ENCODE measurements at regions of chr10 and their contacts with region 1.

Region 1: GRCh38 chr10:119750391-119751230 is 24.8 kb downstream of the INPP5F start:
- DNase-seq: peak in 1 of 2 experiments; percentile 69
- H3K4me3 ChIP-seq: no peak overlapping the region
- H3K27ac ChIP-seq: no peak overlapping the region
- H3K4me1 ChIP-seq: peaks cover 0 to 4% (median 2%) of the 10 kb centered on the region in 4 experiments; a peak in 2 of 7 replicates
- H3K27me3 ChIP-seq: no peaks in the 10 kb centered on the region
- CTCF ChIP-seq: peak; percentile 74 to 99 (median 83)
- EP300 ChIP-seq: no peak
- POLR2A ChIP-seq: no peak
- RAD21 ChIP-seq: peak; percentile 98 to 99

Region 2: DNA sequence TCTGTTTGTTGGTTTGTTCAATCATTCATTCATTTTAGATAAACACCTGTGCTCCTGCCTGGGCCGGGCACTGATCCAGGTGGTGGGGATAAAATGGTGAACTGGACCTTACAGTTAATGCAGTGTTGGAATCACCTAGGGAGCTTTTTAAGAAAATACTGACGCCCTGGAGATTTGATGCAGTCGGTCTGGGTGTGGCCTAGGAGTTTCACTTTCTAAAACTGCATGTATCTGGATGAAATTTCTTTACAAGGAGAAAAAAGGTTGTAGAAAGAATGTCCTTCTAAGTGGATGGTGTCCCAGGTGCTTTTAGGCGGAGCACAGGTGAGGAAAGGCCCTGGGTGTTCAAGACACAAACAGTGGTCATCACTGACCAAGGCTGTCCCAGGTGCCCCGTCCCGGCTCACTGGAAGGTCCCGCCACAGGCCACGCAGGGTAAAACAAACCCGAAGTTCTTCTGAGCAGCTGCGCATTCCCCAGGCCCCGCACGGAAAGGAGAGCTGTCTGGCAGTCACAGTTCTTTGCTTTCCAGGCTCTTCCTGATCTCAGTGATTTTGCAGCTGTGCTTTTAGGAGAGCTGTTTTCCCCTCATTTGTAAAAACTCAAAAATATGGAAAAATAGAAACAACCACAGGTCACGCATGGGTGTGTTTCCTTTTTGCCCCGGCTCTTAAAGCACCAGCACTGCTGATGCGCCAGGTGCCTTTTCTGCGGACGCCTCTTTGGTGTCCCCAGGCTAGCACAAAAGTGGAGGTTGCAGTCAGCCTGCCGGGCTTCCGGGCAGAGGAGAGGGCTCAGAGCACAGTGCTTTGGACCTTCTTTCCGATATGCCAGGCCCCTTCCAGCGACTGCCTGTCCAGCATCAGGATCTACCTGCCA is 381.4 kb before region 1 on chr10:
- CTCF ChIA-PET with region 1: no interaction called
- POLR2A ChIA-PET with region 1: no interaction called
- DNase-seq: no peak
- H3K4me3 ChIP-seq: no peak overlapping the region
- H3K27ac ChIP-seq: no peak overlapping the region
- H3K4me1 ChIP-seq: no peaks in the 10 kb centered on the region
- H3K27me3 ChIP-seq: no peaks in the 10 kb centered on the region
- CTCF ChIP-seq: no peak
- EP300 ChIP-seq: no peak
- POLR2A ChIP-seq: no peak
- RAD21 ChIP-seq: no peak

Region 3: DNA sequence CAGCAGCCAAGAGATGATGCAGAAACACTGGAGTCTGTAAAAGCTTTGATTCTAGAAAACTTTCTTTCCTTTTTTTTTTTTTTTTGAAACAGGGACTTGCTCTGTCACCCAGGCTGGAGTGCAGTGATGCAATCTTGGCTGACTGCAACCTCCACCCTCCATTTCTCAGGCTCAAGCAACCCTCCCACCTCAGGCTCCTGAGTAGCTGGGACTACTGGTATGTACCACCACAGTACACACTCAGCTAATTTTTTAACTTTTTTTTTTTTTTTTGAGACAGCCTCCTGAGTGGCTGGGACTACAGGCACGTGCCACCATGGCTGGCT is 116.4 kb before region 1 on chr10:
- CTCF ChIA-PET with region 1: no interaction called
- POLR2A ChIA-PET with region 1: no interaction called
- DNase-seq: no peak
- H3K4me3 ChIP-seq: no peak overlapping the region
- H3K27ac ChIP-seq: no peak overlapping the region
- H3K4me1 ChIP-seq: no peaks in the 10 kb centered on the region
- H3K27me3 ChIP-seq: no peaks in the 10 kb centered on the region
- CTCF ChIP-seq: no peak
- EP300 ChIP-seq: no peak
- POLR2A ChIP-seq: no peak
- RAD21 ChIP-seq: no peak

Region 4: GRCh38 chr10:119737827-119738226 is 12.8 kb before region 1 on chr10:
- CTCF ChIA-PET with region 1: interaction called, 32 read pairs
- POLR2A ChIA-PET with region 1: interaction called, 5 read pairs
- DNase-seq: no peak
- H3K4me3 ChIP-seq: no peak overlapping the region
- H3K27ac ChIP-seq: no peak overlapping the region
- H3K4me1 ChIP-seq: peaks cover 0 to 15% (median 6%) of the 10 kb centered on the region in 4 experiments; a peak in 3 of 7 replicates
- H3K27me3 ChIP-seq: no peaks in the 10 kb centered on the region
- CTCF ChIP-seq: no peak
- EP300 ChIP-seq: no peak
- POLR2A ChIP-seq: no peak
- RAD21 ChIP-seq: no peak

Region 5: GRCh38 chr10:119769886-119770285 is 19.3 kb after region 1 on chr10:
- CTCF ChIA-PET with region 1: interaction called, 23 read pairs
- POLR2A ChIA-PET with region 1: no interaction called
- DNase-seq: no peak
- H3K4me3 ChIP-seq: no peak overlapping the region
- H3K27ac ChIP-seq: no peak overlapping the region
- H3K4me1 ChIP-seq: peaks cover 0 to 2% (median 0%) of the 10 kb centered on the region in 4 experiments; a peak in 2 of 7 replicates
- H3K27me3 ChIP-seq: no peaks in the 10 kb centered on the region
- CTCF ChIP-seq: no peak
- EP300 ChIP-seq: no peak
- POLR2A ChIP-seq: no peak
- RAD21 ChIP-seq: no peak

Region 6: DNA sequence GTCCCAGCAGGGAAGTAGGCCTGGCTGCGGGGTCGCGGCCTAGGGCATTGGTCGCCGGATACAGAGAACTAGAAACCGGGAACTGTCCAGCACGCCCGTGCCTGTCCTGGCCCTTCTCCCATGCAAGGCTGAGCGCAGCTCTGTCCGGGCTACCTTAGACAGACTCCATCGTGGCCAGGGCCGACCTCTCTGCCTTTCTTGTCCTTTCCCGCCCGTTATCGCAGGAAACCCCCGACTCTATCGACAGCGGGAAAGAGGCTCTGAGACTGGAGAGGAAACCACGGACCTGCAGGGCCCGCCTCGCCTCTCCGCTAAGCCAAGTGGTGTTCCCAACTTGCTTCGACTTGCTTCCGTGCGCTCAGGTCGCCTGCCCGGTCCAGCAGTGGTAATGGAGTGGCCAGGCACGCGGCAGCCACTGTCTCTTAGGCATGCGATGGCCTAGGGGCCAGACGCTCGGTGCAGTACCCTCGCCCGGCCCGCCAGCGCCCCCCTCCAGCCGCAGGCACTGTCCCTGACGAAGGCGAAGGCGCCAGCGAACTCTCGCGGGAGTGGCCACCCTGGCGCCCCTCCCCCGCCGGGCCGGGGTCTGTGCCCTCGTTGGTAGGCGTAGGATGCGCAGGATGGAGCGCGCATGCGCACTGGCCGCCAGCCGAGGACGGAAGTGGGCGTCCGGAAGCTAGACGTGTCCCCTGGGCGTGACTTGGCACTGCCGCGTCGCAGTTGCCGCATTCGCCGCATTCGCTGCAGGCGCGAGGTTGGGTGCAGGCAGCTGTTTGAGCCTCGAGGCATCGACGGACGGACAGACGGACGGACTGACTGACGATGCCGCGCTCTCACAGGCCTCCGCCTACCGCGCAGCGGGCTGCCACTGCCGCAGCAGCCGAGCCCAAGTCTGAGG is 67.6 kb after region 1 on chr10:
- CTCF ChIA-PET with region 1: interaction called, 61 read pairs
- POLR2A ChIA-PET with region 1: interaction called, 40 read pairs
- DNase-seq: peak; percentile 95 to 96
- H3K4me3 ChIP-seq: peak overlapping the region; percentile 54 to 90 (median 74)
- H3K27ac ChIP-seq: peak overlapping the region; percentile 90
- H3K4me1 ChIP-seq: peaks cover 0 to 11% (median 4%) of the 10 kb centered on the region in 4 experiments; a peak in 5 of 7 replicates
- H3K27me3 ChIP-seq: no peaks in the 10 kb centered on the region
- CTCF ChIP-seq: peak; percentile 56 to 65 (median 58)
- EP300 ChIP-seq: no peak
- POLR2A ChIP-seq: peak; percentile 95 to 96
- RAD21 ChIP-seq: peak; percentile 44 to 53

Region 7: GRCh38 chr10:119834188-119834587 is 83.6 kb after region 1 on chr10:
- CTCF ChIA-PET with region 1: interaction called, 21 read pairs
- POLR2A ChIA-PET with region 1: interaction called, 11 read pairs
- DNase-seq: no peak
- H3K4me3 ChIP-seq: no peak overlapping the region
- H3K27ac ChIP-seq: no peak overlapping the region
- H3K4me1 ChIP-seq: no peaks in the 10 kb centered on the region
- H3K27me3 ChIP-seq: no peaks in the 10 kb centered on the region
- CTCF ChIP-seq: no peak
- EP300 ChIP-seq: no peak
- POLR2A ChIP-seq: no peak
- RAD21 ChIP-seq: no peak

Measured in H1 (cell line).